Mammary epithelial cell (primary cell): ENCODE measurements at regions of chr11 and their contacts with region 1.

Region 1: DNA sequence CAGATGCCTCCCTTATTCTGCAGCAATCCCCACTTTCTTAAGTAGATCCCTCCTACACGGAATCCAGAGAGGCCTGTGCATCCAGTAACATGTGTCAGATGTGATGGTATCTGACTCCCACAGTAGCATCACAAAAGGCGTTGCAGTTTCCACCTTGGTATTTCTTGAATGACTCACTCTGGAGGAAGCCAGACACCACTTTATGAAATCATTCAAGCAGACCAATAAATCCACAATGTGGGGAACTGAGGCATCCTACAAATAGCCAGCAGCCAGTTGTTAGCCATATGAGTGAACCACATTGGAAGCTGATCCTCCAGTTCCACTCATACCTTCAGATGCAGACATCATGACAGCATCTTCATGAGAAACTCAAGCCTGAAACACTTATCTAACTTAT is 798.1 kb downstream of the OPCML start:
- DNase-seq: peak; percentile 98
- H3K4me3 ChIP-seq: no peak overlapping the region
- H3K27ac ChIP-seq: no peak overlapping the region
- H3K4me1 ChIP-seq: peaks cover 10% of the 10 kb centered on the region
- H3K27me3 ChIP-seq: no peaks in the 10 kb centered on the region
- CTCF ChIP-seq: no peak

Region 2: GRCh38 chr11:132632641-132633124 is 101.5 kb before region 1 on chr11:
- CTCF ChIA-PET with region 1: no interaction called
- dilution Hi-C with region 1: no loop called
- in situ Hi-C with region 1: no loop called
- intact Hi-C with region 1: loop called (anchors 5 kb)
- DNase-seq: peak; percentile 97
- H3K4me3 ChIP-seq: no peak overlapping the region
- H3K27ac ChIP-seq: peak overlapping the region; percentile 73
- H3K4me1 ChIP-seq: peaks cover 21% of the 10 kb centered on the region
- H3K27me3 ChIP-seq: no peaks in the 10 kb centered on the region
- CTCF ChIP-seq: no peak

Region 3: GRCh38 chr11:132874638-132875037 is 140.4 kb after region 1 on chr11:
- CTCF ChIA-PET with region 1: no interaction called
- dilution Hi-C with region 1: no loop called
- in situ Hi-C with region 1: no loop called
- intact Hi-C with region 1: no loop called
- DNase-seq: peak; percentile 84
- H3K4me3 ChIP-seq: no peak overlapping the region
- H3K27ac ChIP-seq: no peak overlapping the region
- H3K4me1 ChIP-seq: peaks cover 5% of the 10 kb centered on the region
- H3K27me3 ChIP-seq: no peaks in the 10 kb centered on the region
- CTCF ChIP-seq: no peak